Panc1 (cell line): ENCODE measurements at regions of chr2 and their contacts with region 1.

Region 1: GRCh38 chr2:235512699-235513053 is 18.8 kb downstream of the AGAP1 start:
- DNase-seq: no peak
- ATAC-seq: no peak
- H3K4me3 ChIP-seq: no peak overlapping the region
- H3K27ac ChIP-seq: no peak overlapping the region
- H3K4me1 ChIP-seq: peaks cover 8% of the 10 kb centered on the region; the same call in 1 of the 2 replicates
- H3K27me3 ChIP-seq: no peaks in the 10 kb centered on the region
- CTCF ChIP-seq: no peak

Region 2: GRCh38 chr2:234025466-234026185 is 1487.0 kb before region 1 on chr2:
- CTCF ChIA-PET with region 1: no interaction called
- POLR2A ChIA-PET with region 1: interaction called, 10 read pairs
- in situ Hi-C with region 1: no loop called
- intact Hi-C with region 1: no loop called
- DNase-seq: no peak
- ATAC-seq: no peak
- H3K4me3 ChIP-seq: 0 out of 4 replicates have a peak overlapping the region, but pooled peaks of 1 of the 2 experiments have one; percentile 5
- H3K27ac ChIP-seq: no peak overlapping the region
- H3K4me1 ChIP-seq: no peaks in the 10 kb centered on the region; the same call in 1 of the 2 replicates
- H3K27me3 ChIP-seq: no peaks in the 10 kb centered on the region
- CTCF ChIP-seq: no peak

Region 3: DNA sequence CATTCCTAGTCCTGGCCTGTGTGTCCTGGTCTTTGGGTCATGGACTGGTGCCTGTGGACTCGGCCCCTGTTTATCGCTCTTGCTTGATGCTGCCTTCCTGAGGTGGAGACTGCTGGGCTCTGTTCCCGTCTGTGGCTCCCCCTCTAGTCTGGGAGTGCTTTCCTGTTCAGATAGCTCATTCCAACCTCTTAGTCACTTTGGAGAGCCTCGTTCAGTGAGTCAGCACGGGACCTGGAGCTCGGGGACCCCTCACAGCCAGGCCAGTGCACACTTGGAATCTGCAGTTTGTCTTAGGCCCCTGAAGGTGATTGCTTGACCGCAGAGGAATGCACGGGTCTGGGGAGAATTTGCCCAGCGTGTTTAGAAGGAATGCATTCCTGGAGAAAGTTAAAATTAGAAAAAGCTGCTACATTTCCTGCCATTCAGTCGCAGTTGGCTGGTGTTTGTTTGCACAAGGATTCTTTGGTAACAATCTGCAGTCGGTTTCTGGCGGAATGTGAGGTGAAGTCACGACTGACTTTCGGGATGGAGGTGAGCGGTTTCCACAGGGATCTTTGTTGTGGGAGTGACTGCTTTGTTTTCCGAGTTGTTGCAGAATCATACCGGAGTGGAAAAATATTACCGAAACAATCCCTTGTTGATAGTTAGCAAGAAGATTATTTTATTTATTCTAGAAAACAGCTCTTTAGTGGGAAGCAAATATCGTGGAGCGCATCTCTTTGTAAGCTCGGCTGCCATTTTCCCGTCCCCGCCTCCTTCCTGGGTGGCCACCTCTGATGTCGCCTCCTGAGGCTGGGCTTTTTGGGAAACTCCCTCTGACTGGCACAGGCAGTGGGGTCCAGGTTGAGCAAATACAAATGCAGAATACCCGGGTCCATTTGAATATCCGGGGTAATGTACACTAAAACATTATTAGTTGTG is 531.2 kb before region 1 on chr2:
- CTCF ChIA-PET with region 1: no interaction called
- POLR2A ChIA-PET with region 1: no interaction called
- in situ Hi-C with region 1: no loop called
- intact Hi-C with region 1: no loop called
- DNase-seq: peak; percentile 86
- ATAC-seq: peak; percentile 82
- H3K4me3 ChIP-seq: peak overlapping the region; percentile 30 to 49
- H3K27ac ChIP-seq: peak overlapping the region; percentile 90
- H3K4me1 ChIP-seq: peaks cover 93% of the 10 kb centered on the region
- H3K27me3 ChIP-seq: no peaks in the 10 kb centered on the region
- CTCF ChIP-seq: no peak

Region 4: GRCh38 chr2:236168110-236169067 is 655.7 kb after region 1 on chr2 and contains the start of gene GBX2:
- CTCF ChIA-PET with region 1: no interaction called
- POLR2A ChIA-PET with region 1: interaction called, 11 read pairs
- in situ Hi-C with region 1: no loop called
- intact Hi-C with region 1: no loop called
- DNase-seq: no peak
- ATAC-seq: peak; percentile 87
- H3K4me3 ChIP-seq: peak within 1 kb of the TSS; percentile 67 to 76
- H3K27ac ChIP-seq: peak within 1 kb of the TSS; percentile 70
- H3K4me1 ChIP-seq: peaks cover 9% of the 10 kb centered on the region
- H3K27me3 ChIP-seq: no peaks in the 10 kb centered on the region
- CTCF ChIP-seq: peak; percentile 16; the same call in 1 of the 2 replicates
- total RNA-seq, gene GBX2: 10.2 TPM